Activated naive CD4-positive, alpha-beta T cell treated with anti-CD3 and anti-CD28 coated beads, Interleukin-2, amount 10 ng/mL, durations not matched to agents 7 days and 5 days (primary cell): ENCODE measurements at regions of chr3 and their contacts with region 1.

Region 1: DNA sequence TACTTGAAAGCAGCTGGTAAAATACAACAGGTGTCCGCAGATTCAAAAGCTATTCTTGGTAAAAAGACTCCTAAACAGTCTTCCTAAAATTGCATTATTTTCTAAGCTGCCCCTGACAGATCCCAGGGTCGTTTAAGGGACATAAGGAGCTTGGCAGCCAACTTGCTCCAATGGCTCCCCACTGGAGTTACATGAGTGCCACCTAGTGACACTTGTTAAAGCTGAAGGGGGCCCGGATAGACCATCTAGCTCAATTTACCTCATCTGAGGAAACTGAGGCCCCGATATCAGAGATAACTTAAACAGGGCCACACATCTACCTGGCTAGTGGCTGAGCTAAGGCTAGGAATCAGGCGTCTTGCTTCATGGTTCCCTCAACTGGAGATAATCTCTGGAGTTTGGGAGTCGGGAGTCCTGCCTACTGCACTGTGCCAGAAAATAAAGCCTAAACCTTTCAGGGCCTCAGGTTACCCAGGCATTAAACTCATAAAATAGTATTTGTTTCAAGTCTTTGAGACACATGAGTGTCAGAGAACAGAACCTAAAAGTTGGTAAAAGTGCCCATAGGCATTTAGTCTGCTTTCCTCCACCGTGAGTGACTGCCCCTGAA is 6.5 kb upstream of the TBC1D23 start:
- DNase-seq: peak; percentile 69
- H3K4me3 Mint-ChIP-seq: no peak overlapping the region
- H3K27ac Mint-ChIP-seq: no peak overlapping the region
- H3K4me1 Mint-ChIP-seq: peaks cover 14% of the 10 kb centered on the region
- H3K27me3 Mint-ChIP-seq: peaks cover 4% of the 10 kb centered on the region

Region 2: DNA sequence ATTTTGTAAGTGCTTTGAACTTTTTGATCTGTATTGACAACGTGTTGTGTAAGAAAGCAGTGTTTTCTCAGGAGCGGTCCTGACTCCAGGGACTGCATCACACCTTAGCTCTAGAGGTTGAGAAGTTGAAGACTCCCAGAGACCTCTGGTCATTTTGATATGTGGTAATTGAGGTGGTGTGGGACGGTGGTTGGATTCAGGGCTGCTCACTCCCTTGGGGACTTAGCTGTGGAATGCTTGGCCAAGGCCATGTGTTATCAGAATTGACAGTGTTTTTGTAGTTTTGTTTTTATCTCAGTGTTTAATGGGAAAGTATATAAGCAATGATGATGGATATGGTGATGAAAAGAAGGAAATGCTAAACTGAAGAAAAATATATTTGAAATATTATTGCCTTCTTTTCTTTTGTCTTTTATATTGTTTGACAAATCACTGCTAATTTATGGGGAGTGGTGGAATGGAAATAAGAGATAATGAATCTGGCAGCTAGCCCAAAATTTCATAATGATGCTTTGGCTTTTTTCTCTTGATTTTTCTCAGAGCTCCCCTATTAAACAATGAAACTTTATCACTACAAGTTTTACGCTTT is 420.6 kb before region 1 on chr3:
- CTCF ChIA-PET with region 1: interaction called, 42 read pairs
- DNase-seq: no peak
- H3K4me3 Mint-ChIP-seq: no peak overlapping the region
- H3K27ac Mint-ChIP-seq: no peak overlapping the region
- H3K4me1 Mint-ChIP-seq: no peaks in the 10 kb centered on the region
- H3K27me3 Mint-ChIP-seq: no peaks in the 10 kb centered on the region

Region 3: GRCh38 chr3:99842826-99843589 is 411.3 kb before region 1 on chr3:
- CTCF ChIA-PET with region 1: interaction called, 42 read pairs
- DNase-seq: no peak
- H3K4me3 Mint-ChIP-seq: no peak overlapping the region
- H3K27ac Mint-ChIP-seq: no peak overlapping the region
- H3K4me1 Mint-ChIP-seq: no peaks in the 10 kb centered on the region
- H3K27me3 Mint-ChIP-seq: no peaks in the 10 kb centered on the region

Region 4: GRCh38 chr3:100068826-100069225 is 185.4 kb before region 1 on chr3:
- CTCF ChIA-PET with region 1: interaction called, 84 read pairs
- DNase-seq: peak; percentile 91
- H3K4me3 Mint-ChIP-seq: no peak overlapping the region
- H3K27ac Mint-ChIP-seq: peak overlapping the region; percentile 13
- H3K4me1 Mint-ChIP-seq: peaks cover 58% of the 10 kb centered on the region
- H3K27me3 Mint-ChIP-seq: no peaks in the 10 kb centered on the region

Region 5: DNA sequence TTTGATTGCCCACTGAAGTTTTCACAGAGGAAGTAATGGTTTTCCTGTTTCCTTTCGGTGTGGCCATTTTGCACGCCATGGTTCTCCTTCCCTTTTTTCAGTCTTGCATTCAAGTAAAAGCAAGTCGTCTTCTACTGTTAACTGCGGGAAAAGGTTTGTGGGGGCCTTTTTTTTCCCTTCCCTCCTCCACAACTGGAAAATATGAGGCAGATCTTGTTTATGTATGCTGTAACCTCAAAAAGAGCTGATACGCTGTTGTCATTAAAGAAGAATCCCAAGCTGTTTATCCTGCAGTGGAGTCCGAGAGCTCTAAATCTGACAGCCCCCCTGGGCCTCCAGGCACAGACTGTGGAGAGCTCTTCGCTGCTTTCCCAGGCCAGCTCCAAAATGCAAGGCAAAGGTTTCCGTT is 180.4 kb before region 1 on chr3:
- CTCF ChIA-PET with region 1: interaction called, 84 read pairs
- DNase-seq: peak; percentile 41
- H3K4me3 Mint-ChIP-seq: peak overlapping the region; percentile 47
- H3K27ac Mint-ChIP-seq: peak overlapping the region; percentile 88
- H3K4me1 Mint-ChIP-seq: peaks cover 82% of the 10 kb centered on the region
- H3K27me3 Mint-ChIP-seq: no peaks in the 10 kb centered on the region